Activated T-helper 1 cell treated with anti-CD3 and anti-CD28 coated beads, Interleukin-12 subunit alpha, Interleukin-12 subunit beta, Interleukin-2, Interleukin-4 antibody, amounts not matched to agents 30 ng/mL and 10 ng/mL and 1 ng/mL, durations not matched to agents 14 hours and 24 hours and 36 hours (primary cell): ENCODE measurements at regions of chr9 and their contacts with region 1.

Region 1: GRCh38 chr9:469672-470551 is 255.2 kb downstream of the DOCK8 start:
- DNase-seq: peak; percentile 88
- H3K4me3 Mint-ChIP-seq: peak overlapping the region; percentile 97
- H3K27ac Mint-ChIP-seq: peak overlapping the region; percentile 98
- H3K4me1 Mint-ChIP-seq: peaks cover 36% of the 10 kb centered on the region
- H3K27me3 Mint-ChIP-seq: peaks cover 1% of the 10 kb centered on the region

Region 2: GRCh38 chr9:453832-454231 is 16.1 kb before region 1 on chr9:
- intact Hi-C with region 1: loop called (anchors 2 kb)
- DNase-seq: no peak
- H3K4me3 Mint-ChIP-seq: no peak overlapping the region
- H3K27ac Mint-ChIP-seq: no peak overlapping the region
- H3K4me1 Mint-ChIP-seq: peaks cover 23% of the 10 kb centered on the region
- H3K27me3 Mint-ChIP-seq: no peaks in the 10 kb centered on the region

Region 3: DNA sequence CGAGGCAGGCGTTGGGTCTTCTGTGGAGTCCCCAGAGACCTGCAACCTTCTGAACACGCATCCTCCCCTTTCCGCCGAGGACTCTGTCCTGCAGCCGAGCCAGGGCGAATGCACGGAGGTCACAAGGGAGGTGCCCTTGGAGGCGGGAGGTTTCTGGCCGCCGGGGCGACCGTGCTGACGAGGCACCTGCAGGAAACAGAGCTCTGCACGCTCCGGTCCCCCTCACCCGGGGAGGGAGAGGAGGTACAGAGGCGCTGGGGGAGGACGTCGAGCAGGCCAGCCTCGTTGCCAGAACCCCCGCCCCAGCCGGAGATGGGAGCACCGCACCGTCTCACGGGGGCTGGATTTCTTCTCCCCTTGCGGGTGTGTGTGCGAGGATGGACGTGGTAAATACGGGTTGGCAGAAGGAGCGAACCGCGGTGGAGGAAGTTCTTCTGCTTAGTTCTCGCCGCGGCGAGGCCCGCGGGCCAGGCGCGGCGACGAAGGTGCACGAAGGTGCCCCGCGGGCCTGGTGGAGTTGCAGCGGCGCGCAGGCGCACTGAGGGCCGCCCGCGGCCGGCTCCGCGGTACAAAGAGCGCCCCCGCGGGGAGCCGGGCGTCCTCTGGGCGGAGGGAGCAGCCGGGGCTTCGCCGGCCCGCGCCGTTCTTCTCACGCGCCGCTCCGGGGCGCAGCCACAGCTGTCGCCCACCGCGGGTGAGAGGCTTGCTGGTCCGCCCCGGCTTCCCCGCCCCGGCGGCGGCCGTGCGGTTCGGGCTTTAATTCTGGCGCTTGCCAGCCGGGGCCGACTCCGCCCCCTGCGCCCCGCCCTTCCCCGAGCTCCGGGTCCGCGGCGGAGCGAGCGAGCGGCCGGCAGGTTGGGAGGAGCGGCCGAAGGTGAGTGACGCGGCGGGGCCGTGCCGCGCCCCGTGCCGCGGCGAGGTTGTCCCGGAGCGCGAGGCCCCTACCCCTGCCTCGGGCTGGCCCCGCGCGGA is 34.3 kb after region 1 on chr9:
- intact Hi-C with region 1: loop called (anchors 1 kb)
- DNase-seq: peak; percentile 69
- H3K4me3 Mint-ChIP-seq: peak within 1 kb of the TSS; percentile 80
- H3K27ac Mint-ChIP-seq: peak within 1 kb of the TSS; percentile 73
- H3K4me1 Mint-ChIP-seq: no peaks in the 10 kb centered on the region
- H3K27me3 Mint-ChIP-seq: peaks cover 46% of the 10 kb centered on the region

Region 4: GRCh38 chr9:1140057-1140456 is 670.1 kb after region 1 on chr9:
- intact Hi-C with region 1: no loop called
- DNase-seq: no peak
- H3K4me3 Mint-ChIP-seq: no peak overlapping the region
- H3K27ac Mint-ChIP-seq: no peak overlapping the region
- H3K4me1 Mint-ChIP-seq: no peaks in the 10 kb centered on the region
- H3K27me3 Mint-ChIP-seq: peaks cover 1% of the 10 kb centered on the region